ENCODE measurements at regions of chr11 and their contacts with region 1.

Region 1: DNA sequence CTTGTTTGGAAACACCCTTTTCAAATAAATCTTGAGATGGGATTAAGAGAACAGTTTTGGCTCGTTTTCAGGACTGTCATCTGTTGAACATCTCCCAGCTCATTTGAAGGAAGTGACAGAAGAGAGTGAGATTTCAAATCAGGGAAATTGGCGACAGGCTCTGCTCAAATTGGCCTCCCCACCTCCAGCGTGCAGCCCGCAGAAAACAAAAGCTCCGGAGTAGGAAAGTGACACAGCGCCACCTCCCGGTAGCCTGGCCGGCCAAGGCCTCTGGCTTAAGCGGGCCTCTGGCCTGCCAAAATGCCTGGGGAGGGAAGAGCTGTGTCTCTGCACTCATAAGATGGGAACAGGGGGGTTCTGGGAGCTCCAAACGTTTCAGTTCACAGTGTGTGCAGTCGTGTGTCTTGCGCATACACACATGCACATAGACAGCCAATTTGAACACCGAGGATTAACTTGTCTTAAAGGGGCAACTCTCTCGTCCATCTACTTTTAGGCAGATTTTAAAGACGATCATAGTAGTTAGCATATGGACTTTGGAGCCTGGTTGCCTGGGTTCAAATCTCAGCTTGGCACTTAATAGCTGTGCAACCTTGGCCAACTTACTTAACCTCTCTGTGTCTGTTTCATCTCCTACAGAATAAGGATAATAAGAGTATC is 132.7 kb upstream of the RCN1 start:
- DNase-seq: no peak
- H3K4me3 ChIP-seq: no peak overlapping the region
- H3K27ac ChIP-seq: no peak overlapping the region
- H3K27me3 ChIP-seq: no peaks in the 10 kb centered on the region
- CTCF ChIP-seq: peak; percentile 85

Region 2: GRCh38 chr11:31107062-31107461 is 851.1 kb before region 1 on chr11:
- CTCF ChIA-PET with region 1: interaction called, 21 read pairs
- POLR2A ChIA-PET with region 1: no interaction called
- DNase-seq: no peak
- H3K4me3 ChIP-seq: no peak overlapping the region
- H3K27ac ChIP-seq: no peak overlapping the region
- H3K27me3 ChIP-seq: no peaks in the 10 kb centered on the region
- CTCF ChIP-seq: peak; percentile 46

Region 3: DNA sequence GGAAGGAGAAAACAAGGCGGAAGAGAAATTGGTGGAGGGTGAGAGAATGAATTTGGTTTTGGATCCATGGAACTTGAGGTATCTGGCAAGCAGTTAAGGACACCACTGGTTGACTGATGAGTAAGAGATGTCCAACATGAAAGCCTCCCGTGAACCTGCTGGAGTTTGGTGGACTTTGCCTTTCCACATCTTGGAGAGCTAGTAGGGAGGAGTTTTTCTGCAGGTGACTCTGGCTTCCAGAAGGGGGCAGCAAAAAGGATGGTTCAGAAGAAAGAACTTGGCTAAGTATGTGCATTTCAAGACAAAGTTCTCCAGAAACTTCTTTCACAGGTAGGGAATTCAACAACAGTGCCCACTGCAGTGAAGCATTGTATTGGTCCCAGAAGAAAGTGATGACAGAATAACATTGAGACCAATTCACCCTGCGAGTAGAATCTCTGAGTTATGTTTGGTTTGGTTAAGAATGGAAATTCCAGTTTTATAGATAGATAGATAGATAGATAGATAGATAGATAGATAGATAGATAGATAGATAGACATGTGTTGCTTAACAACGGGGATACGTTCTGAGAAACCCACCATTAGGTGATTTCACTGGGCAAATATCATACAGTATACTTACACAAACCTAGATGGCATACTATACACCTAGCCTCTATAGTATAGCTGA is 617.2 kb before region 1 on chr11:
- CTCF ChIA-PET with region 1: interaction called, 13 read pairs
- POLR2A ChIA-PET with region 1: no interaction called
- DNase-seq: no peak
- H3K4me3 ChIP-seq: no peak overlapping the region
- H3K27ac ChIP-seq: no peak overlapping the region
- H3K27me3 ChIP-seq: no peaks in the 10 kb centered on the region
- CTCF ChIP-seq: peak; percentile 70

Region 4: GRCh38 chr11:31487848-31488247 is 470.4 kb before region 1 on chr11:
- CTCF ChIA-PET with region 1: interaction called, 19 read pairs
- POLR2A ChIA-PET with region 1: no interaction called
- DNase-seq: peak; percentile 27
- H3K4me3 ChIP-seq: no peak overlapping the region
- H3K27ac ChIP-seq: no peak overlapping the region
- H3K27me3 ChIP-seq: no peaks in the 10 kb centered on the region
- CTCF ChIP-seq: peak; percentile 61

Region 5: GRCh38 chr11:31779374-31779791 is 178.8 kb before region 1 on chr11:
- CTCF ChIA-PET with region 1: no interaction called
- POLR2A ChIA-PET with region 1: no interaction called
- DNase-seq: peak; percentile 43
- H3K4me3 ChIP-seq: no peak overlapping the region
- H3K27ac ChIP-seq: peak overlapping the region; percentile 32
- H3K27me3 ChIP-seq: no peaks in the 10 kb centered on the region
- CTCF ChIP-seq: no peak

Region 6: GRCh38 chr11:31932879-31933278 is 25.3 kb before region 1 on chr11:
- CTCF ChIA-PET with region 1: interaction called, 26 read pairs
- POLR2A ChIA-PET with region 1: no interaction called
- DNase-seq: no peak
- H3K4me3 ChIP-seq: no peak overlapping the region
- H3K27ac ChIP-seq: no peak overlapping the region
- H3K27me3 ChIP-seq: no peaks in the 10 kb centered on the region
- CTCF ChIP-seq: no peak

Region 7: GRCh38 chr11:31968461-31969358 is 10.5 kb after region 1 on chr11:
- CTCF ChIA-PET with region 1: interaction called, 34 read pairs
- POLR2A ChIA-PET with region 1: no interaction called
- DNase-seq: no peak
- H3K4me3 ChIP-seq: no peak overlapping the region
- H3K27ac ChIP-seq: no peak overlapping the region
- H3K27me3 ChIP-seq: peaks cover 16% of the 10 kb centered on the region
- CTCF ChIP-seq: no peak

Region 8: DNA sequence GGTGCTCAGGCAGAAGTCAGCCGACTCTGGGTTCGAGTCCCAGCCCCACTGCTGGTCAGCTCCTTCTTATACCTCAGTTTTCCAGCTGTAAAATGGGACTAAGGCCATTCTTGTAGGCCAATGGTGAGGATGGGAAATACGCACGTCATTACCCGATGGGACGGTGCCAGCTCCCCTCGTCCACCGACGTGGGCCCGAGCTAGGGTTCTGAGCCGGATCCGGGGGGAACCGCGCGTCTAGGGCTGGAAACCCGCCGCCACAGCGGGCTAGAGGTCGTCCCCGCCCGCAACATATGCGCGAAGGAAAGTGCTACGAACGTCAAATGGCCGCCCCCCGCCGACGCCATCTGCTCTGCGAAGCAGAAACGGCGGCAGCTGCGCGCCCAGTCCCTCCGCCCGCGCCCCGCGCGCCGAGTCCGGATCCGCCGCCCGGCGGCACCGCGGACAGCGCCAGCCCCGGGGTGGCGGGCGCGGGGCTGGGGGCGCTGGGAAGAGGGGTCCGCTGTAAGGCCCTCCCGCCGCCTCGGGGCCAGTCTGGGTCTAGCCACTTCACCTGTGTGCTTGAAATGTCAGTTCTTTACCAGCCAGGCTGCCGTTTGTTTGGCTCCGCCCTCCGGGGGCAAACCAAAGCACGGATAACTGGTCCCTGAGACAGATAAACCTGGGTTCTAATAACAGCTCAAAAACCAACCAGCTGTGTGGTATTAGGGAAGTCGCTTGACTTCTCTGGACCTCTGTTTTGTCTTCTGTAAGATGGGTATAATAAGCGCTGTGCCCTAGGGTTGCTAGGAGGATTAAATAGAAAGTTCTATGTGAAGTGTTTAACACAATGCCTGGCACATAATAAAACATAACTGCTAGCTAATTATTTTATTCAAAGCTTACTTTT is 29.2 kb after region 1 on chr11:
- CTCF ChIA-PET with region 1: interaction called, 12 read pairs
- POLR2A ChIA-PET with region 1: no interaction called
- DNase-seq: no peak
- H3K4me3 ChIP-seq: no peak overlapping the region
- H3K27ac ChIP-seq: no peak overlapping the region
- H3K27me3 ChIP-seq: peaks cover 44% of the 10 kb centered on the region
- CTCF ChIP-seq: no peak